Naive thymus-derived CD4-positive, alpha-beta T cell (primary cell): ENCODE measurements at regions of chrX and their contacts with region 1.

Region 1: GRCh38 chrX:132219343-132219768 is at the start of gene RAP2C:
- DNase-seq: peak; percentile 15 to 50 (median 32)
- ATAC-seq: peak; percentile 47
- H3K4me3 ChIP-seq: peak within 1 kb of the TSS; percentile 51
- H3K4me3 Mint-ChIP-seq: peak within 1 kb of the TSS; percentile 79 to 96 (median 88)
- H3K27ac ChIP-seq: peak within 1 kb of the TSS; percentile 94
- H3K27ac Mint-ChIP-seq: peak within 1 kb of the TSS; percentile 87 to 97 (median 94)
- H3K4me1 ChIP-seq: peaks cover 9 to 14% of the 10 kb centered on the region in 2 donors
- H3K4me1 Mint-ChIP-seq: peaks cover 7 to 35% (median 25%) of the 10 kb centered on the region in 7 donors
- H3K27me3 ChIP-seq: no peaks in the 10 kb centered on the region
- H3K27me3 Mint-ChIP-seq: no peaks in the 10 kb centered on the region
- total RNA-seq, gene RAP2C: 21.4 to 34.7 (median 30.3) TPM

Region 2: DNA sequence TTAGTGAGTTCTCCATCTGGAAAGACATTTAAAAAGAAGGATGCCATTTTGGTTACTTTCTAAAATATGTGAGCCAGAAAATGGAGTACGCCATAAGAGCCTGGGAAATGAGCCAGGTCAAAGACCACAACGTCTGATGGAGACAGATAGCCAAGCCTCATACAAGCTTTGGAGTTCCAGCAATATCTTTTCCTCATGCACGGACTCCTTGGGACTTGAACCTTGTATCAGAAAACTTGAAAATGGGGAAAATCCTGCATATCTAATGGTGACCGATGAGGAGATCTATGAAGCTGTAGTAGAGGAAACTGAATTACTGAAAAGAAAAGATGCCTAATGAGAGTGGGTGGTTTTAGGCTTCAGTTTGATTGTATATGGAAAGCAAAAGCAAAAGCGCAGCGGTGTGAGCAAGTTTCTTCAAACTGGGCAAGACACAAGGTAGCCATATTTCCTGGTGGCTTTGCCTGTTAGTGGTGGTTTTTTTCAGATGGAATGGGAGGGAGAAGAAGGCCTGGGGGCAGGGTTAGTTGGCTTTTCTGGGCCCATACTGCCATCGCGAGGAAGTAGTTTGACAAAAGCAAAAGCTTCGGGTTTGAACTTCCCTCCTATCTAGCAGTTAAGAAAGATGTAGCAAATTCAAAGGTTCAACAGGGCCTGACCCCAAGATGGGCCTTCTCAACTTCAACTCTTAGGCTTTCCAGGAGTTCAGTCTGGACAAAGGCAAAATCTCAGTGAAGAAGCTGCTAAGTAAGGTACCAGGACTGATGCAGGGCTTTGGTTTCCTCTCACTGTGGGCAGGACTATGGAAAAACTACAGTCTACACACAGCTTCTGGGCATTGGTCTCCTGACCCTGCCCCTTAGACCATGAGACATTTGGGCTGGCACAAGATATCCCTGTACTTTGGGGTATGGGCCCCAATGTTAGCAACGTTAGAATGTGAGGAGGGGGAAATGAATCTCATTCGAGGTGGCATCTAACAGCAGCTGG is 406.2 kb before region 1 on chrX:
- CTCF ChIA-PET with region 1: no interaction called
- POLR2A ChIA-PET with region 1: no interaction called
- intact Hi-C with region 1: loop called in 1 of 2 experiments (anchors 2 kb)
- DNase-seq: peak; percentile 36 to 97 (median 95)
- ATAC-seq: peak; percentile 96
- H3K4me3 ChIP-seq: peak overlapping the region; percentile 69
- H3K4me3 Mint-ChIP-seq: peak overlapping the region; percentile 78 to 98 (median 90)
- H3K27ac ChIP-seq: peak overlapping the region; percentile 75
- H3K27ac Mint-ChIP-seq: peak overlapping the region; percentile 92 to 98 (median 95)
- H3K4me1 ChIP-seq: peaks cover 9% of the 10 kb centered on the region in 2 donors
- H3K4me1 Mint-ChIP-seq: peaks cover 2 to 35% (median 28%) of the 10 kb centered on the region in 7 donors
- H3K27me3 ChIP-seq: no peaks in the 10 kb centered on the region
- H3K27me3 Mint-ChIP-seq: no peaks in the 10 kb centered on the region

Region 3: GRCh38 chrX:131841496-131842410 is 377.6 kb before region 1 on chrX:
- CTCF ChIA-PET with region 1: interaction called, 19 read pairs
- POLR2A ChIA-PET with region 1: no interaction called
- intact Hi-C with region 1: loop called in 1 of 2 experiments (anchors 1 kb)
- DNase-seq: peak in 8 of 9 donors; percentile 5 to 67 (median 49)
- ATAC-seq: peak; percentile 81
- H3K4me3 ChIP-seq: no peak overlapping the region
- H3K4me3 Mint-ChIP-seq: peak overlapping the region in 1 of 10 donors; percentile 56
- H3K27ac ChIP-seq: no peak overlapping the region
- H3K27ac Mint-ChIP-seq: no peak overlapping the region
- H3K4me1 ChIP-seq: no peaks in the 10 kb centered on the region
- H3K4me1 Mint-ChIP-seq: peaks cover 0 to 9% (median 0%) of the 10 kb centered on the region in 7 donors
- H3K27me3 ChIP-seq: no peaks in the 10 kb centered on the region
- H3K27me3 Mint-ChIP-seq: peaks cover 0 to 2% (median 0%) of the 10 kb centered on the region in 5 donors

Region 4: DNA sequence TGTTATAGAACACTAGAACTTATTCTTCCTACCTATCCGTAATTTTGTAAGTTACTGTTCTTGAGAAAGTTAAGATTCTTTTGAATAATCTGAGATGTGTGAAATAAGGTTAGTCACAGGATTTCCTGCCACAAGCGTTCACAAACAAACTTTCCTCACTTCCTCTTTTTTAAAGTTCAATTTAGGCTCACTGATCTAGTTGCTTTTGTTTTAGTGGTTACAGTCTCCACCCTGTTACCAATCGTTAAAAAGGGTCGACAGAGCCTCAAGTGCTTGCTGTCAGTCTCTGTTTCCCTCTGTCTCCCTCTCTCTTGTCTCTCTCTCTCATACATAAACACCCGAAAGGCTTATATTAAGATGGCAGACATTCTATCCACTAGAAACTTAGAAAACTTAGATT is 232.1 kb before region 1 on chrX:
- CTCF ChIA-PET with region 1: interaction called, 3 read pairs
- POLR2A ChIA-PET with region 1: interaction called, 3 read pairs
- intact Hi-C with region 1: loop called (anchors 1 kb)
- DNase-seq: peak in 7 of 9 donors; percentile 53 to 82 (median 72)
- ATAC-seq: peak; percentile 97
- H3K4me3 ChIP-seq: peak overlapping the region; percentile 19
- H3K4me3 Mint-ChIP-seq: peak overlapping the region; percentile 34 to 83 (median 74)
- H3K27ac ChIP-seq: peak overlapping the region; percentile 57
- H3K27ac Mint-ChIP-seq: peak overlapping the region; percentile 88 to 100 (median 97)
- H3K4me1 ChIP-seq: peaks cover 33 to 58% of the 10 kb centered on the region in 2 donors
- H3K4me1 Mint-ChIP-seq: peaks cover 38 to 86% (median 62%) of the 10 kb centered on the region in 7 donors
- H3K27me3 ChIP-seq: no peaks in the 10 kb centered on the region
- H3K27me3 Mint-ChIP-seq: no peaks in the 10 kb centered on the region

Region 5: DNA sequence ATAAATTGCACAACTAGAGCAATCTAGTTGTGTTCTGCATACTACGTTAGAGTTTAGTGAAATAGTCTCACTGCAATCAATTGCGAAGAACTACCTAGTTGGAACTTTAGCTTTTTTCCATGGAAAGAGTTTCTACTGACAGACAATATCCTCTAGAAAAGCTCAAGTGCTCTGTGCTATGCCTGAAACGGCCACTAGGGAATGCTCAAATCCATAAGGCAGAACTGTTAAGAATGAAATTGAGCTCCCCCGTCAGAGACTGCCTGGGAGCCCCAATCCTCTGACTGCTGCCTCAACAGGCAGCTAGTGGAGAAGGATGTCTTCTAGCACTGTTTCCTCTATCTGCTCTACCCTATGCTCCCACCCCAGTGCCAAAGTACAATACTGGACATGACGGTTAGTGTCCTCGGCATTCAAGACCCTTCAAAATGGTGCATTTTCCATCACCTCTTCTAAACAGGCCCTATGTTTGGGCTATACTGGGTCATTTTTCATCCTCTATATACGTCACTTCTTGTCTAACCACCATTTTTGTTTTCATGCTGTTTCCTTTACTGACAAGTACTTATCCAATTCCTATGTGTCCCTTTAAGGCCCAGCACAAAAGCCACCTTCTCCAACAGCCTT is 126.8 kb before region 1 on chrX:
- CTCF ChIA-PET with region 1: interaction called, 20 read pairs
- POLR2A ChIA-PET with region 1: interaction called, 3 read pairs
- intact Hi-C with region 1: loop called (anchors 1 kb)
- DNase-seq: peak; percentile 5 to 52 (median 33)
- ATAC-seq: peak; percentile 83
- H3K4me3 ChIP-seq: no peak overlapping the region
- H3K4me3 Mint-ChIP-seq: no peak overlapping the region
- H3K27ac ChIP-seq: no peak overlapping the region
- H3K27ac Mint-ChIP-seq: no peak overlapping the region
- H3K4me1 ChIP-seq: no peaks in the 10 kb centered on the region
- H3K4me1 Mint-ChIP-seq: peaks cover 0 to 11% (median 7%) of the 10 kb centered on the region in 7 donors
- H3K27me3 ChIP-seq: no peaks in the 10 kb centered on the region
- H3K27me3 Mint-ChIP-seq: peaks cover 0 to 7% (median 0%) of the 10 kb centered on the region in 5 donors

Region 6: GRCh38 chrX:132270699-132271098 is 51.3 kb after region 1 on chrX:
- CTCF ChIA-PET with region 1: no interaction called
- POLR2A ChIA-PET with region 1: no interaction called
- intact Hi-C with region 1: no loop called
- DNase-seq: no peak
- ATAC-seq: no peak
- H3K4me3 ChIP-seq: no peak overlapping the region
- H3K4me3 Mint-ChIP-seq: no peak overlapping the region
- H3K27ac ChIP-seq: no peak overlapping the region
- H3K27ac Mint-ChIP-seq: no peak overlapping the region
- H3K4me1 ChIP-seq: no peaks in the 10 kb centered on the region
- H3K4me1 Mint-ChIP-seq: peaks cover 0 to 6% (median 0%) of the 10 kb centered on the region in 7 donors
- H3K27me3 ChIP-seq: no peaks in the 10 kb centered on the region
- H3K27me3 Mint-ChIP-seq: peaks cover 0 to 2% (median 0%) of the 10 kb centered on the region in 5 donors

Region 7: GRCh38 chrX:132480581-132481203 is 261.3 kb after region 1 on chrX:
- CTCF ChIA-PET with region 1: no interaction called
- POLR2A ChIA-PET with region 1: no interaction called
- intact Hi-C with region 1: loop called in 1 of 2 experiments (anchors 2 kb)
- DNase-seq: peak in 8 of 9 donors; percentile 21 to 57 (median 43)
- ATAC-seq: peak; percentile 88
- H3K4me3 ChIP-seq: peak overlapping the region; percentile 58
- H3K4me3 Mint-ChIP-seq: peak overlapping the region; percentile 73 to 96 (median 88)
- H3K27ac ChIP-seq: peak overlapping the region; percentile 69
- H3K27ac Mint-ChIP-seq: peak overlapping the region; percentile 80 to 94 (median 92)
- H3K4me1 ChIP-seq: peaks cover 13 to 23% of the 10 kb centered on the region in 2 donors
- H3K4me1 Mint-ChIP-seq: peaks cover 8 to 69% (median 54%) of the 10 kb centered on the region in 7 donors
- H3K27me3 ChIP-seq: no peaks in the 10 kb centered on the region
- H3K27me3 Mint-ChIP-seq: no peaks in the 10 kb centered on the region